Dorsolateral prefrontal cortex (tissue), 120 donors: ENCODE measurements at regions of chr16 and their contacts with region 1.

Region 1: DNA sequence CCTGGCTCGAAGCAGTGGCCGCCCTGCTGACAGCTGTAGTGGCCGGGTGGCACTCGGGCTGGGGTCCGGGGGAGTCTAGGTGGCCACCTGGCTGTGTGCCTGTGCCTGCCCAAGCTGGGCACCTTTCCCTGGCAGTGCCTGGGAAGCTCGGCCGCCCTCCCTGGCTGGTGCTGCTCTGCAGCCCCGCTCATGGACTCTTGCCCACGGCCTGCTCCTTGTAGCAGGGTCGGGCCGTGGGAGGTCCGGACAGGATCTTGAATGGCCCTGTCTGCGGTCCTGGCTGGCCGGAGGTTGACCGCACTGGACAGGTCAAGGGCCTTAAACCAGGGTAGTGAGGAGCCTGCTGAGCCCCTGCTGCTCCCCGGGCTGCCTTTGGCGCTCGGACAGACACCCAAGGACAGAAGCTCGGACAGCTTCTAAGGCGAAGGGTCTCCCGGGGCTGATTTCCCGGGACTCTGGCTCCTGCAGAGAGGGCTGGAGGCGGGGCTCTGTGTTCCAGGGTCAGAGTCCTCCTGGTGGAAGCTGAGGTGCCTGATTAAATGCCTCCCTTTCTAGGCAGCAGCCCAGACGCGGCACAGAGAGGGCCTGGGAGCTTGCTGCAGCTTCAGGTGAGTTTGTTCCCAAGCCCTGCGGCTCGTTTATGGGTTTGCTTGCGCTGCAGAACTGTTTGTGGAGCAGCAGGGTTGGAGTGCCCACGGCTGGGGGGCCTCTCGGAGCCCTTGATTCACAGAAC is 6.0 kb downstream of the CAPN15 start:
- DNase-seq: peak in 1 of 10 donors; percentile 57
- H3K4me3 ChIP-seq: peak overlapping the region in 1 of 59 donors; percentile 30
- H3K27ac ChIP-seq: peak overlapping the region in 1 of 59 donors; percentile 74
- H3K27me3 ChIP-seq: no peaks in the 10 kb centered on the region
- CTCF ChIP-seq: no peak

Region 2: DNA sequence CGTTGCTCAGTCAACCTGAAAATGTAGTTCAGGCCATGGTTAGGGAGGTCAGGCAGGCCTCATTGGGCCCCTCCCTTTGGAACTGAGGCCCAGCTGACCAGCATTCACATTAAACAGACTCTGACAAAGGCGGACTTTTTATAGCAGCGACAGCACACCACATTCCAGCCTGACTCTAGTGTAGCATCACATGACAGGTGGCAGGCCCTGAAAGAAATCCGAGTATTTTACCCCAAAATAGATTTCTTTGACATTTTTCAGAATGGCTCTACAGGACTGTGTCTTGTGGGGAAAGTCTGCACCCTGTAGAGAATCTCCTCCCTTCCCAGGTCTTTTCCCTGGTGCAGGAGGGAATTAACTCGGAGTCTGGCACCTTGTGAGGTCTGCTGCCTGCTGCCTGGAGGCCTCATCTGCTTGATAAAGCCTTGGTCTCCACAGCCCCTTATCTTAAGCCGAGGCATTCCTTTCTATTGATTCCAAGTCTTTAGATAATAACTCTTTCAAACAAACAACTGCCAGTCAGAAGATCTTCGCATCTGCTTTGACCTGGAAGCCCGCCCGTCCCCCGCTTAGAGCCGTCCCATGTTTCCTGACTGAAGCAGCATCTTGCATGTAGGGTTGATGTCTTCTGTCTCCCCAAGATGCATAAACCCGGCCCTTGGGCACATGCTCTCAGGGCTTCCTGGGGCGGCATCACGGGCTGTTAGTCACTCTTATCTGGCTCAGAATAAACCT is 50.0 kb before region 1 on chr16:
- intact Hi-C with region 1: no loop called
- DNase-seq: peak in 3 of 10 donors; percentile 57 to 68 (median 66)
- H3K4me3 ChIP-seq: peak overlapping the region in 2 of 59 donors; percentile 6 to 9
- H3K27ac ChIP-seq: peak overlapping the region; percentile 20 to 94 (median 84)
- H3K27me3 ChIP-seq: no peaks in the 10 kb centered on the region
- CTCF ChIP-seq: peak in 1 of 56 donors; percentile 17

Region 3: DNA sequence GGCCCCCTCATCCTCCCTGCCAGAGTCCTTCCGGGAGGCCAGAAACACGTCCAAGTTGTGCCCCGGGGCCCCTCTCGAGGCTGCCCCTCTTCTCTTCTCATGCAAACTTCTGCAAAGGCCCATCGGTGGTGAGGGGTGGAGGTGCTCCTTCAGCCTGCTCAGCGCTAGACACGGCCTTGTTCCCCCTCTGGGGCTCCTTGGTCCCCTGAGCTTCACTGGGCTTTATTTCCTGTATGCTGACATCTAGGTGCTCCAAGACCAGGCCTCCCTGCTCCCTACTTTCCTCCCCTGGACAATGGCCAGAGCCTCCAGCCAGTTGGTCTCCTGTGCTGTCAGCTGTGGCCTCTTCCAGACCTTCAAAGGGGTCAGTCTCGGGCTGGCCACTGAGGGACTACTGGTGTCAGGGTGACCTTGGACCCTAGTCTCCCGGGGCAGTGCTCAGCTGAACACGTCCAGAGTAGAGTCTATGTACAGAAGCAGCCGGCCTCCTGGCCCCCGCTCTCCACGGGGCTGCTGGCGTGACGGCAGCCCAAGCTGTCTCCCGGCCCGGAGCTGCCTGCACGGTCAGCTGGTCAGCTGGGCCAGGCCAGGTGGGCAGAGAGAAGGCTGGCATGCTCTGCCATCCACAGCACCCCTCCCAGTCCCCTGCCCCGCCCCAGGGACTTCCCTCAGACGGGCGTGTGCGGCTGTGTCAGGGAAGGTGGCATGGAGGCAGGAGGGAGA is 24.9 kb after region 1 on chr16:
- intact Hi-C with region 1: loop called in 1 of 2 experiments (anchors 1 kb)
- DNase-seq: peak in 1 of 10 donors; percentile 91
- H3K4me3 ChIP-seq: peak overlapping the region in 1 of 59 donors; percentile 36
- H3K27ac ChIP-seq: peak overlapping the region in 1 of 59 donors; percentile 95
- H3K27me3 ChIP-seq: peaks cover 0 to 44% (median 25%) of the 10 kb centered on the region in 45 donors
- CTCF ChIP-seq: no peak